Activated T-helper 1 cell treated with anti-CD3 and anti-CD28 coated beads, Interleukin-12 subunit alpha, Interleukin-12 subunit beta, Interleukin-2, Interleukin-4 antibody, amounts not matched to agents 30 ng/mL and 10 ng/mL and 1 ng/mL, durations not matched to agents 14 hours and 24 hours and 36 hours (primary cell): ENCODE measurements at regions of chr19 and their contacts with region 1.

Region 1: GRCh38 chr19:42283143-42284065 is 14.4 kb downstream of the CIC start:
- DNase-seq: peak; percentile 92
- H3K4me3 Mint-ChIP-seq: no peak overlapping the region
- H3K27ac Mint-ChIP-seq: no peak overlapping the region
- H3K4me1 Mint-ChIP-seq: peaks cover 47% of the 10 kb centered on the region
- H3K27me3 Mint-ChIP-seq: no peaks in the 10 kb centered on the region

Region 2: DNA sequence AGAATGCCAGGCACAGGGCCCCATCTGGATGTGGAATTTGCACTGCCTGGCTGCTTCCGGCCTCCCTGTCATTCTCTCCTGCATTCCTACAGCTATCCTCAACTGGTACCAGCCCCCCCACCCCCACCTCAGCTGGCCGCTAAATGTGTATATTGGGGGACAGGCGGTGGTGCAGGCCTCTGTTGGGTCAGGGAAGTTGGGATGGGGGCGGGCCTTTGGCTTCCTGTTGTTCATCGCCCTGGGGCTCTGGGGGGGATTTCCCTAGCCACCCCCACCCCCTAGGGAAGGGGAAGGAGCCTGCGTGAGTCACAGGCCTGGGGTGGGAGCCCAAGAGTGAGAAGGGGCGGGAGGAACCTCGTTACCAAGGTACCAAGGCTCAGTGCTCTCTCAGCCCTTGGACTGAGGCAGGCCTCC is 161.7 kb before region 1 on chr19:
- intact Hi-C with region 1: loop called (anchors 2 kb)
- DNase-seq: peak; percentile 74
- H3K4me3 Mint-ChIP-seq: peak overlapping the region; percentile 78
- H3K27ac Mint-ChIP-seq: peak overlapping the region; percentile 97
- H3K4me1 Mint-ChIP-seq: peaks cover 42% of the 10 kb centered on the region
- H3K27me3 Mint-ChIP-seq: no peaks in the 10 kb centered on the region

Region 3: GRCh38 chr19:42184401-42184861 is 99.0 kb before region 1 on chr19:
- intact Hi-C with region 1: loop called (anchors 2 kb)
- DNase-seq: peak; percentile 56
- H3K4me3 Mint-ChIP-seq: peak overlapping the region; percentile 19
- H3K27ac Mint-ChIP-seq: peak overlapping the region; percentile 54
- H3K4me1 Mint-ChIP-seq: peaks cover 45% of the 10 kb centered on the region
- H3K27me3 Mint-ChIP-seq: peaks cover 15% of the 10 kb centered on the region

Region 4: DNA sequence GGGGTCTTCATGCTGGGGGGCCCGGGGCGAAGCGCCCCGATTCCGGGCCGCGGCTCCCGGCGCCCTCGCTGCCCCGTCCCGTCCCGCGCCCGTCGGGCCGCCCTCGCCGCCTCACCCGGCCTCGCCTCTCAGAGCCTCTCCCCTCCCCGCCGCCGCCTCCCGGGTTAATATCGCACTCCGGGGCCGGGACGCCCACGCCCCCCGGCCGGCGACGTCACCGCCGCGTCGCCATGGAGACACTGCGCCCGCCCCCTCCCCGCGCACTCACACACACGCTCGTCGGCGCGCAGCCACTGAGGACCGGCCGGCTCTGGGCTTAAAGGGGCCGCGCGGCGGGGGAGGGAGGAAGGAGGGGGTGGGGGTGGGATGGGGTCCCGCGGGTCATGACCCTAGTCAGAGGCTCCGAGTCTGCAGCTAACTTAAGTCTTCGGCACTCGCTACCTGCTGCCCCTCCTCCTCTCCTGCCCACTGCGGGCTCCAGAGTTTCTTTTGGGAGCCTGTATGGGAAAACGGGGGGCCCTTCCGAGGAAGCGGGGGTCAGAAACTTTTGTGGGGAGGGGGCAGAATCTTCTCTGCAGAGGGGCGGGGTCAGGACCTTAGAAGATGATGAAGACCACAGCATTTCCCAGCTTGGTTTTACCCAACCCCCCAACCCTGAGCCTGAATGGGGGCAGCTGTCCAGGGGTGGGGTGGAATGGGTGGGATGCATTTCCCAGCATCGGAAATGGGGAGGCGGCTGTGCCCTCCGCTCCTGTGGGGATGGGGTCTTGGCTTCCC is 28.2 kb before region 1 on chr19 and contains the start of gene ERF:
- intact Hi-C with region 1: loop called (anchors 1 kb)
- DNase-seq: peak; percentile 92
- H3K4me3 Mint-ChIP-seq: peak within 1 kb of the TSS; percentile 74
- H3K27ac Mint-ChIP-seq: peak within 1 kb of the TSS; percentile 65
- H3K4me1 Mint-ChIP-seq: peaks cover 19% of the 10 kb centered on the region
- H3K27me3 Mint-ChIP-seq: peaks cover 9% of the 10 kb centered on the region
- total RNA-seq, gene ERF: 71.9 and 78.4 TPM in 2 replicates

Region 5: GRCh38 chr19:42301656-42302203 is 18.3 kb after region 1 on chr19 and contains the start of gene PRR19:
- intact Hi-C with region 1: loop called (anchors 1 kb)
- DNase-seq: no peak
- H3K4me3 Mint-ChIP-seq: peak within 1 kb of the TSS; percentile 88
- H3K27ac Mint-ChIP-seq: peak within 1 kb of the TSS; percentile 89
- H3K4me1 Mint-ChIP-seq: peaks cover 14% of the 10 kb centered on the region
- H3K27me3 Mint-ChIP-seq: peaks cover 2% of the 10 kb centered on the region
- total RNA-seq, gene PRR19: 1.0 and 1.4 TPM in 2 replicates